Right ventricle myocardium inferior (tissue), 1 donor: ENCODE measurements at regions of chr2 and their contacts with region 1.

Region 1: GRCh38 chr2:118403658-118404451 is 315.6 kb downstream of the INSIG2 start:
- DNase-seq: no peak
- ATAC-seq: no peak

Region 2: GRCh38 chr2:118242216-118242615 is 161.6 kb before region 1 on chr2:
- intact Hi-C with region 1: no loop called
- DNase-seq: no peak
- ATAC-seq: no peak

Region 3: DNA sequence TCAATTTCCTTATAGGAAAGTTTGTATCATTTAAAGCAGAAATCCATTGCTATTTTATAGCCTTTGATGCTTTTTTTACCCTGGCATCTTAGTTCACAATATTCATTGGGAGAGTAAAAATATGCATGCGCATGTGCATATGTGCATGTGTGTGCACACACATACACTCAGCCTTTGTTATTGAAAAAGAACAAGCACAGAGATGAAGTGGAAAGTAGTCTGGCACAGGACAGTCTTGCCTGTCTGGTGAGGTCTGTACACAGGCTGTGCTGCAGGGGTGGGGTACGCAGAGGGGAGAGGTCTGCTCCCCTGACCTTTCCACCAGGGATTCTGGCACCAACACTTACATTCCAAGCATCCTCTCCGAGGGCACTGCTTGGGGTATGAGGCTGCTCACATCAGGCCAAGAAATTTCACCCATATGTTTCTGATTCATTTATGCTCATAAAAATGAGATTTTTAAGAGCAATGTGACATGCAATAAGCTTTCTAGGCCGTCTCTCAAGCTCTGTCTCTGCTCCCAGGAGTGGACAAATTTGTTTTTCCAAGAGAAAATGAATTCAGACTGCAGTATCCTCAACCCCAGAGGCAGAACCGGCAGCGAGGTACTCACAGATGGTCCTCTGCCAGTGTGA is 78.4 kb before region 1 on chr2:
- intact Hi-C with region 1: loop called (anchors 2 kb)
- DNase-seq: no peak
- ATAC-seq: no peak